Dorsolateral prefrontal cortex (tissue), 120 donors: ENCODE measurements at regions of chr12 and their contacts with region 1.

Region 1: DNA sequence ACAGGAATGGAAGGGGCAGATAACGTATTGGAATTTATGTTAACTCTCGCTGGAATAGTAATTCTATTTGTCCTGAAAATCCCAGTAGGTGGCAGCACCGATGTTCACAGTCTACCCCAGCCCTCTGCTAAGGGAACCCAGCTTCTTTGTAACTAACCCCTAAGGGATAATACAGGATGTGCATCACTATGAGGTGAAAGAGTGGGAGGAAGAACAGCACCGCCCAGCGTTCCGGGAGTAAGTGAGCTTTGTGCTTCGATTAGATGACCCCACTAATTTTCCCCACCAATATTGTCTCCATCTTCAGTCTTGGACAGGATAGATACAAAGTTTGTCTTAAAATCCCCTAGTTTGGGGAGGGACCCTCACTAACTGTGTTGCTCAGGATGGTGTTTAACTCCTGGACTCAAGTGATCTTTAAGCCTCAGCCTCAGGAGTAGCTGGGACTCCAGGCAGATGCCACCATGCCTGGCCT is 2.7 kb downstream of the SLC2A3 start:
- DNase-seq: peak; percentile 28 to 81 (median 65)
- H3K4me3 ChIP-seq: peak overlapping the region in 57 of 59 donors; percentile 28 to 92 (median 73)
- H3K27ac ChIP-seq: peak overlapping the region in 43 of 59 donors; percentile 10 to 96 (median 84)
- H3K27me3 ChIP-seq: no peaks in the 10 kb centered on the region
- CTCF ChIP-seq: peak; percentile 63 to 91 (median 79)

Region 2: GRCh38 chr12:6697584-6698351 is 1235.5 kb before region 1 on chr12:
- intact Hi-C with region 1: no loop called
- DNase-seq: peak in 3 of 10 donors; percentile 15 to 39 (median 34)
- H3K4me3 ChIP-seq: peak overlapping the region in 23 of 59 donors; percentile 5 to 80 (median 69)
- H3K27ac ChIP-seq: peak overlapping the region in 33 of 59 donors; percentile 4 to 91 (median 46)
- H3K27me3 ChIP-seq: peaks cover 0 to 41% (median 12%) of the 10 kb centered on the region in 45 donors
- CTCF ChIP-seq: peak in 30 of 56 donors; percentile 13 to 44 (median 28)

Region 3: DNA sequence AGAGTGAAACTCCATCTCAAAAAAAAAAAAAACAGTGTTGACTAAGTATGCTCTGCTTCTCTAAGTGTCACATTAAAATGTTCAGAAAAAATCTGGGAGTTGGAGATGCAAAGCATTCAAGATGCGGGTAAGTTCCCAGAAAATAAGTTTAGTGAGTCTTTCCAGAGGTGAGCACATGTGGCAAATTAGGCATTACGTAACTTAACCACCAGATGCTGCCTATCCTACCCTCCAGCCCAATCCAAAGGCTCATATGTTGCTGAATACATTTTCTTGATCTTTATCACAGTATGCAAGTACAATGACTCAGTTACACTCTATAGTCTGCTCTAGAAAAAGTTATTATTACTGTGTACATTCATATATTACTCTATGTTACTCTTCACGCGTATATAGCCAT is 64.2 kb before region 1 on chr12:
- intact Hi-C with region 1: loop called in 1 of 2 experiments (anchors 10 kb)
- DNase-seq: no peak
- H3K4me3 ChIP-seq: no peak overlapping the region
- H3K27ac ChIP-seq: no peak overlapping the region
- H3K27me3 ChIP-seq: peaks cover 0 to 29% (median 16%) of the 10 kb centered on the region in 45 donors
- CTCF ChIP-seq: no peak

Region 4: DNA sequence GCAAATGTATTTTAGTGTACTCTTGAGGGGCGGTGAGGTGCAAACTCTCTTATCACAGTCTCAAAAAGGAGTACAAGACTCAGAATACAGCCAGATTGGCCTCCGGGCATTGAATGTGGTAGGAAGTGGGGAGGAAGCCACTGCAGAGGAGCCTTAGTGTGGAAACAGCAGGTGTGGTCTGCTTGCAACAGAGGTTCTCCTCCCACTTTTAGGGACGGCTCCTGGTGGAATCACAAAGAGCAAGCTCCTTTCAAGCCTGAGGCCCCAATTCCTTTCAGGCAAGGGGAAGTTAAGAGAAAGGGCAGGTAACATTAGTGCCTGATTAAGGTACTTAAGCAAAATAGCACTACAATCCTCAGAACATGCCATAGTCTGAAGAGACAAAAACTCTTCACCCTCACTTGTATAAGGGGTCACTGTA is 26.4 kb after region 1 on chr12:
- intact Hi-C with region 1: loop called in 1 of 2 experiments (anchors 2 kb)
- DNase-seq: no peak
- H3K4me3 ChIP-seq: peak overlapping the region in 31 of 59 donors; percentile 47 to 79 (median 66)
- H3K27ac ChIP-seq: peak overlapping the region in 37 of 59 donors; percentile 4 to 98 (median 90)
- H3K27me3 ChIP-seq: no peaks in the 10 kb centered on the region
- CTCF ChIP-seq: no peak

Region 5: DNA sequence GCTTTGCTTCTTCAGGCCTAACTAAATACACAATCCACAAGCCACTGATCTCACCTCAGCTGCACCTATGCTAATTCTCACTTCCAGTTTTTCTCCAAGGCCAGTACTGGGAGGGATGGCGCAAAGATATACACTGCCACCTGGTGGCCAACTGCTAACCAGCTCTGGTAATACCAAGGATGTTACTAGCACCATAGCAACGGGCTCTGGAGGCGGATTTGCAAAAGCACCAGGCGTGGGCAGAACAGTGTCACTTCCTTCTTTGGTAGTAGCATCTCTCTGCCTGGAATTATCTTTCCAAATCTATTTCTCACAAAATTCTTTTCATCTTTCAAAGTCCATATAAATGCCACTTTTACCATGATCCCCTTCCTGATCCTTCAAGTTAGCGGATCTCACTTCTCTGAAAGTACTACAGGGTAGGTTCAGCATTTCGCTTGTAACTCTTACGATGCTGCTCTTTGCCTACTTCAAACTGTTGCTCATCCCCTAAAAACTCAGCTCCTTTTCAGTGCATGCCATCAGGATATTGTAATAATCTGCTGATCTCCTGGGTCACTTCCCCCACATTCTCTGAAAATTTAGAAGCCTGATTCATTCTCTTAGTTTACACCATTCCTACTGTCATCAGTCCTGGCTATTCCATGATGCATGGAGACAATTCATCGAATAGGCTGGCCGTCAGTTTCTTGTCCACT is 62.1 kb after region 1 on chr12:
- intact Hi-C with region 1: loop called (anchors 1 to 2 kb)
- DNase-seq: peak; percentile 49 to 95 (median 86)
- H3K4me3 ChIP-seq: peak overlapping the region in 21 of 59 donors; percentile 1 to 41 (median 24)
- H3K27ac ChIP-seq: peak overlapping the region in 34 of 59 donors; percentile 0 to 77 (median 36)
- H3K27me3 ChIP-seq: no peaks in the 10 kb centered on the region
- CTCF ChIP-seq: peak; percentile 67 to 97 (median 90)

Region 6: DNA sequence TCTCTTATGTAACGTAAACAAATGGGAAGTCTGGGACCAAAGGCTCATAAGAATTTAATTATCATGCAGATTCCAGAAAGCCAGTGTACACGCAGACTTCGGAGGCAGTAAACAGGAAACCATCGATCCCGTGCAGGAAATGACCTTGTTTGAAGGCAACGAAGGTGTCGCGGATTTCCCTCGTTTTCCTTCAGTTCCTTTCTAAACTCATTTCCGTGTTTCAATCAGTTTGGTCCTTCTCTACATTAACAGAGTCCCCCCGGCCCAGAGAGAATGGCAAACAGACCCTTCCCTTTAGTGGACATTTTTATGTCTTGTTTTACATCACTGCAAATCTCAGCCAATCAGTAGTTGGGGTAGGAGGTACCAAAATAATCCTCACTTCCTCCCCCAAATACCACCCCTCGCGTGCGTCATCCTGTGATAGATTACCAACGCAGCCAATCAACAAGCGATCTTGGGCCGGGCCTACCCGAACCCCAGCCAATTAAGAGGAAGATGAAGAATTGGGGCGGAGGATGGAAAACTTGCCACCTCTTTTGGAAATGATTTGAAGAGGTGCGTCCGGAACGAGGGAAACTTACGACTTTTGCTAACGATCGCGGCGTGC is 93.1 kb after region 1 on chr12:
- intact Hi-C with region 1: loop called in 1 of 2 experiments (anchors 10 kb)
- DNase-seq: peak; percentile 89 to 99 (median 97)
- H3K4me3 ChIP-seq: peak overlapping the region; percentile 60 to 98 (median 87)
- H3K27ac ChIP-seq: peak overlapping the region; percentile 96 to 100 (median 100)
- H3K27me3 ChIP-seq: no peaks in the 10 kb centered on the region
- CTCF ChIP-seq: peak in 7 of 56 donors; percentile 6 to 25 (median 10)